ENCODE measurements at regions of chr7 and their contacts with region 1.

Region 1: DNA sequence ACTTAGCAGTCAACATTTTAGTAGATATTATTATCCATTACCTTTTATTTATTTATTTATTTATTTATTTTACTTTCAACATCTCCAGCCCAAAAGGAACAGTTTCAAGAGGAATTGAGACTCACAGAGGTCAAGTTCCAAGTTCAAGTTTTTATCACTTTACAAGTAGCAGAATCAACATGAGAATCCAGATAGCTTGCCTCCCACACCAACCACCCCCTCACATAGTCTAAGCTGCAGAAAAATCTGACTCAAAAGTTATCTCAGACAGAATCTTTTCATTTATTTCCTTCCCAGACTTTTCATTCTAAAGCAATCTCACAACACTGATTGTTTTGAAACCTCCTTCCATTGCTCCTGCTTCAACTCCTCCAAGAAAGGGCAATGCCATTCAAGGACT is 129.6 kb downstream of the GRM3 start:
- DNase-seq: no peak
- H3K4me3 ChIP-seq: no peak overlapping the region
- CTCF ChIP-seq: no peak

Region 2: DNA sequence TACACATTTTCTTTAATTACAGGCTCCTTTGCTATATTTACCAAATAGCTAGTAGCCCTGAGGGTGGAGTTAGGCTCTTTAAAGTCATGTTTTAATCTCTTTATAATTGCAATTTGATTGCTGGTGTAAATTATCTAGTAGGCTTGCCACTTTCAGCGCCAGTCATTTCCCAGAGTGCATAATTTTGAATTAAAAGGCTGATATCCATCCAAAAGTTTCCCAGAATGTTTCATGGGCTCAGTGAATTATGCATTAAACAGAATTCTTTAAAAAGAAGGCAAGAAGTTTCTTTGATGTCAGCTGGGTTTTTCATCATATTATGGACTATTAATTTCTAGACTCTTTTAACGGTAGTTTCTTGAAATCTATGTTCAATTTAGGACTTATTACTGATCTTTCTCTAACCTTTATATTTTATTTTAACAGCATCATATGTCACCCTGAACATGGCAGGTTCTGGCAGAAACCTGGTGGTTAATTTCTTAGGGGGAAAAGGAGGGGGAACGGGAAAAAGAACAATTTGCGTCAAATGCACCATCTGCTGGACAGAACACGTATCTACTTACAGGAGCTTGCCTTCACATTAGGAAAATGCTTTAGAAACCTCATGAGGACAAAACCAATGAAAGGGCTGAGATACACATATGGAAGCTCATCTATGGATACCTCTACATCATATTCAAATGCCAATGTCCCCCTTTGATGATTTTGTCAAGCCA is 41.5 kb after region 1 on chr7:
- in situ Hi-C with region 1: loop called (anchors 5 kb)
- DNase-seq: no peak
- H3K4me3 ChIP-seq: no peak overlapping the region
- CTCF ChIP-seq: peak; percentile 54

Measured in astrocyte of the cerebellum (primary cell).